AG04449 (cell line): ENCODE measurements at regions of chr11 and their contacts with region 1.

Region 1: DNA sequence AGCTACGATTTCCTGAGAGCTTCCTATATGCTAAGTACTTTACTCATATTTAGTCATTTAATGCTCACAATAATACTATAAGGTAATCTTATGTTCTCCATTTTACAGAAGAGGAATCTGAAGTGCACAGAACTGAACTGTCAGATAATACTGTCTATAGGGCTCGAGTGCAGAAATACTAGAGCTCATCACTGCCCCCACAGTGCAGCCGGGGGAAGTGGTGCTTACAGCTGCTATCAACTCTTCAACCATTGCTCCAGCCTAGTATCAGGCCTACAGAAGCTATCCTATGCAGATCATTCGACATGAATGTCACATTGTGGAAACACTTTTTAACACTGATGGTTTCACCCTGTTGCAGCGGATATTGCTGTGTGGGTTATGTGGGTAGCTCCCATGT is 929.9 kb downstream of the NTM start:
- DNase-seq: no peak
- H3K4me3 ChIP-seq: no peak overlapping the region
- CTCF ChIP-seq: peak; percentile 33

Region 2: DNA sequence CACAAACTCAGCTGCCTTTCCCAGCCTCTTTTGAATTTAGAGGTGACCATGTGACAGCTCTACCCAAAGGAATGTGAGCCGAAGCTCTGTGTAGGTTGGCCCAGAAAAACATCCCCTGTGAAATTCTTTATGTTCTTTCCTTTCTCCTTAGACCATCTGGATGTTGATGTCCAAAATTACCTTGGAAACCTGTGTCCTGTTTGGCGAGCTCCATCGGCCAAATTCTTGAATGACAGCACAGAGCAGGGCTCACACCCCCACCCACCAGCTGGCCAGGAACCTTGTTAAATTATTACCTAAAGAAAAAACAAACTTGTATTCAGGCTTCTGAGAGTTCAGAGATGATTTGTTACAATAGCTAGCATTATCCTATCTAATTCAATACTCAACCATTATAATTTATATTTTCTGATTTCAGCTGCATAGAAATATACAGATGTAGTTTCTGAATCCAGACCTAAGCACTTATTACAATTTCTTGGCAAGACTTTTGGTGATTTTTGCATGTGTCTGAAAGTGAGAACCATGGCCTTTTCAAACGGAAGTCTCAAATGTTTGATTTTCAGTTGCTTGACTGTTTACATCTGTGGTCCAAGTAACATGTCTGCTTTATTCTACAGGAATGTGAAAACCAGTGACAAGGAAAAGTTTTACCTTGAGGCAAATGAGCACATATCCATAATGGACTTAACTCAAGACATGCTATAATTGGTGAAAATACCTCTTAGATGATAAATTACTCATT is 375.7 kb before region 1 on chr11:
- CTCF ChIA-PET with region 1: no interaction called
- POLR2A ChIA-PET with region 1: no interaction called
- DNase-seq: no peak
- H3K4me3 ChIP-seq: no peak overlapping the region
- CTCF ChIP-seq: no peak

Region 3: DNA sequence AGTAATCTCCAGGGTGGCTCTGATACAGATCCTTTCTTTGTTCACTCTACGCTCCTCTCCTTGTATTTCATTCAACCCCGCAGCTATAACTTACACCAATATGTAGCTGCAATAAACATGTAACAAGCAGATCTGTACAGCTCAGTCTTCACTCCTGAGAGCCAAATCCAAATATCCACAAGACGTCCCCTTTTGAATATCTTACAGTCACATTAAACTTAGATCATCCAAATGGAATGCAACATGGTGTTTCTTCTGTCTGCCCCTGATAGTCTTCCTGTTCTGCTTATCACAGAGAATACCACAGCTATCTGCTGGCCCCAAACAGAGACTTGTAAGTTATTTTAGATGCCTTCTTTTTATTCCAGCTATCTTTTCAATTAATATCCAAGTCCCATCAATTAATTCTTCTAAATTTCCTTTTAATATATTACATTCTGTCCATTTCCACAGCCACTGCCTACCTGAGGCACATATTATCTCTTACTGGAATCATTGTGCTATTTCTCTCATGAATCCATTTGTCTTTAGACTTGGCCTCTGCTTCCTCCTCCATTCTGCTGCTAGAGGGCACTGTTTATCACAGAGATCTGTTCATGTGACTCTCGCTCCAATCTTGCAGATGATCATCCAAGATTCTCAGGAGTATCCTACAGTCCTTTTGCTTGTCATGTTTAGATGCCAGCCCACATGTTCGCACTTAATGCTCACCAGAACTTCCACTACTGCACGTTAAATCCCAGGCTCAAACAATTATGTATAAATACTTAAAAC is 21.3 kb before region 1 on chr11:
- CTCF ChIA-PET with region 1: interaction called, 17 read pairs
- POLR2A ChIA-PET with region 1: no interaction called
- DNase-seq: no peak
- H3K4me3 ChIP-seq: no peak overlapping the region
- CTCF ChIP-seq: peak; percentile 57

Region 4: DNA sequence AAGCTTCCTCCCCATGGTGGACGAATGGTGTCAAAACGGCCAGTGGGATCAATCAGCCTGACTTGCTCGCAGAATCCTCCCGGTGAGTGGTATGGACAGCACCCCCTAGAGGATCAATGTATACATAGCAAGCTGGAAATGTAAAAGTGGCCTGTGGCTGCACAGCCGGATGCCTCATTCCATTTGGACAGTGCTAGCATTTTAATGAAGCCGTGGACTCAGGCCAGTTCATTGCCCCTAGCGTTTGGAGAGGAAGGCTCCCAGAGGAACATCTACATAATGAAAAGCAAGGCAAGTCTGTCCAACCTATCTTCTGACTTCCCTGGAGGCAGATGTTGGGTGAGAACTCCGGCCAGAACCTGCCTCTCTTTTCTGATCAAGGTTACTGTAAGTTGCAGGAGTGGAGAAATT is 12.4 kb after region 1 on chr11:
- CTCF ChIA-PET with region 1: interaction called, 65 read pairs
- POLR2A ChIA-PET with region 1: no interaction called
- DNase-seq: no peak
- H3K4me3 ChIP-seq: no peak overlapping the region
- CTCF ChIP-seq: peak; percentile 52